Activated CD4-positive, alpha-beta memory T cell treated with anti-CD3 and anti-CD28 coated beads for 36 hours (primary cell): ENCODE measurements at regions of chr7 and their contacts with region 1.

Region 1: DNA sequence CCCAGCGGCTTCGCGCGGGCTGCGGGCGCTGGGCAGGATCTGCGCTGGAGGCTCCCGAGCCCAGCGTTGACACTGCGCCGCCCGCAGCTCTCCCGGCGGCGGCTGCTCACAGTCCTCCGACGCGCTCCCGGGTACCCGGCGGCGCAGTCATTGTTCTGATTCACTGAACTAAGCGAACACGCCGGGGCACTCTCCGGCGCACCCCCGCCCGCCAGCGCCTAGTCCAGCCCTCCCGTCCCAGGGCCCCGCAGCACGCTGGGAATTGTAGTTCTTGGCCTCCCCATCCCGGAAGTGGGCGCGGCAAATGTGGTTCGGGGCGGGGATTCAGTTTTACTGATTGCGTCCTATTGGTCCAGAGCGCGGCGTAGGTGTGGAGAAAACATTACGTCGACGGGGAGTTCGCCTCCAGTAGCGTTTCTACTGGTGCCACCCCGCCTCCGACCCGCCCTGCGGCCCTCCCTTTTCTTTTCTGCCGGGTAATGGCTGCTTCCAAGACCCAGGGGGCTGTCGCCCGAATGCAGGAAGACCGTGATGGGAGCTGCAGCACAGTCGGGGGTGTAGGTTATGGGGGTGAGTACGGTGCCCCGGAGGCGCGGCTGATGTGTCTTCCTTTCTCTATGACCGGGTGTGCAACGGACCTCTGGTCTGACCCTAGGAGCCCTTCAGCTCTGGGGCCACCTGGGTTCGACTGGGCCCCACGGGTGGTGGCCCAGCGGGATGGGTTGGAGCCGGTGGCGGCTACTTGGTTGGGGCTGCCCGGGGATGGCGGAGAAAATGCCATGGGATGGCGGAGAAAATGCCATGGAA is at the starts of genes DOCK4 and ZNF277:
- DNase-seq: peak; percentile 99
- H3K4me3 Mint-ChIP-seq: peak within 1 kb of the TSS; percentile 86
- H3K27ac Mint-ChIP-seq: peak within 1 kb of the TSS; percentile 73
- H3K4me1 Mint-ChIP-seq: peaks cover 27% of the 10 kb centered on the region
- H3K27me3 Mint-ChIP-seq: peaks cover 30% of the 10 kb centered on the region
- total RNA-seq, gene DOCK4: 0.36 to 1.1 TPM
- total RNA-seq, gene ZNF277: 24.9 to 26.6 TPM

Region 2: GRCh38 chr7:111561885-111562732 is 644.3 kb before region 1 on chr7 and contains the start of gene IMMP2L:
- CTCF ChIA-PET with region 1: no interaction called
- POLR2A ChIA-PET with region 1: no interaction called
- intact Hi-C with region 1: loop called (anchors 1 kb)
- DNase-seq: peak; percentile 93
- H3K4me3 Mint-ChIP-seq: peak within 1 kb of the TSS; percentile 83
- H3K27ac Mint-ChIP-seq: peak within 1 kb of the TSS; percentile 79
- H3K4me1 Mint-ChIP-seq: peaks cover 40% of the 10 kb centered on the region
- H3K27me3 Mint-ChIP-seq: peaks cover 4% of the 10 kb centered on the region
- total RNA-seq, gene IMMP2L: 14.4 to 20.5 TPM

Region 3: GRCh38 chr7:112036071-112036470 is 170.4 kb before region 1 on chr7:
- CTCF ChIA-PET with region 1: no interaction called
- POLR2A ChIA-PET with region 1: no interaction called
- intact Hi-C with region 1: no loop called
- DNase-seq: no peak
- H3K4me3 Mint-ChIP-seq: no peak overlapping the region
- H3K27ac Mint-ChIP-seq: no peak overlapping the region
- H3K4me1 Mint-ChIP-seq: no peaks in the 10 kb centered on the region
- H3K27me3 Mint-ChIP-seq: no peaks in the 10 kb centered on the region

Region 4: GRCh38 chr7:112286250-112287086 is 80.0 kb after region 1 on chr7:
- CTCF ChIA-PET with region 1: no interaction called
- POLR2A ChIA-PET with region 1: no interaction called
- intact Hi-C with region 1: loop called (anchors 5 kb)
- DNase-seq: no peak
- H3K4me3 Mint-ChIP-seq: no peak overlapping the region
- H3K27ac Mint-ChIP-seq: no peak overlapping the region
- H3K4me1 Mint-ChIP-seq: peaks cover 5% of the 10 kb centered on the region
- H3K27me3 Mint-ChIP-seq: no peaks in the 10 kb centered on the region

Region 5: DNA sequence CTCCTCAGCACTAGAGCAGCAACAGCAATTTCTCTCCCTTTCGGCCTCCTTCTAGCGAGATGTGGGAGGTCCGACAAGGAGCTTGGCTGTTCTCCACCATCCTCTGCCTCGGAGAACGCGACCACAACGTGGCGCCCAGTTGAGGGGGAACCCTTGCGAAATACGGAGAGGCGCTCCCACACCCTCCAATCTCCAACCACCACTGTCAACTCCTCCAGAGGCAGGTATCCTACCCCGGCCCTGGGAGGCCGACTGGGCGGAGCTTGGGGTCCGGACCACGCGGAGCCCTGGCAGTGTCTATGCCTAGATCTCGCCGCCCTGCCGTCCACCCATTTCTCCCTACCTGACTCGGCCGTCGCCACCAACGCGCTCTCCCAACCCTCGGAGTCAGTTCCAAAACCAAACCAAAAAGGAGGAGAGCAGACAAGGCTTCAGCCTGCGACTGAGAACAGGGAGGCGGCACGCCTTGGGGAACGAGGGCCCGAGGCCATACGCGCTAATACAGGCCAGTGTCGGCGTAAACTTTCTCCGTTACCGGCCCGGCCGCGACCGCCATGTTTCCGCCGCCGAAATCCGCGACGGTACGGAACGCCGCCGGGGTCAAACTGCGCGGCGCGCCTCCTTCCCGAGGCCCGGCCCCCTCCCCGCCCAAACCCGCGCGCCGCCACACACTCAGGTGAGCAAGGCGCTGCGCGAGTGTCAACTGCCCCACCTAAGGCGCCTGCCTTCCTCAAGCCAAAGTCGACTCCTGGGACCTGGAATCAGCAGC is 583.6 kb after region 1 on chr7 and contains the start of gene TMEM168:
- CTCF ChIA-PET with region 1: no interaction called
- POLR2A ChIA-PET with region 1: no interaction called
- intact Hi-C with region 1: loop called (anchors 2 kb)
- DNase-seq: peak; percentile 90
- H3K4me3 Mint-ChIP-seq: peak within 1 kb of the TSS; percentile 98
- H3K27ac Mint-ChIP-seq: peak within 1 kb of the TSS; percentile 85
- H3K4me1 Mint-ChIP-seq: peaks cover 44% of the 10 kb centered on the region
- H3K27me3 Mint-ChIP-seq: no peaks in the 10 kb centered on the region
- total RNA-seq, gene TMEM168: 16.1 to 17.4 TPM

Region 6: GRCh38 chr7:113118074-113118959 is 911.9 kb after region 1 on chr7 and contains the start of gene SMIM30:
- CTCF ChIA-PET with region 1: no interaction called
- POLR2A ChIA-PET with region 1: no interaction called
- intact Hi-C with region 1: loop called (anchors 1 kb)
- DNase-seq: peak; percentile 92
- H3K4me3 Mint-ChIP-seq: peak within 1 kb of the TSS; percentile 85
- H3K27ac Mint-ChIP-seq: peak within 1 kb of the TSS; percentile 87
- H3K4me1 Mint-ChIP-seq: peaks cover 38% of the 10 kb centered on the region
- H3K27me3 Mint-ChIP-seq: no peaks in the 10 kb centered on the region
- total RNA-seq, gene SMIM30: 37.5 to 41.5 TPM